SK-N-SH (cell line): ENCODE measurements at regions of chr7 and their contacts with region 1.

Region 1: DNA sequence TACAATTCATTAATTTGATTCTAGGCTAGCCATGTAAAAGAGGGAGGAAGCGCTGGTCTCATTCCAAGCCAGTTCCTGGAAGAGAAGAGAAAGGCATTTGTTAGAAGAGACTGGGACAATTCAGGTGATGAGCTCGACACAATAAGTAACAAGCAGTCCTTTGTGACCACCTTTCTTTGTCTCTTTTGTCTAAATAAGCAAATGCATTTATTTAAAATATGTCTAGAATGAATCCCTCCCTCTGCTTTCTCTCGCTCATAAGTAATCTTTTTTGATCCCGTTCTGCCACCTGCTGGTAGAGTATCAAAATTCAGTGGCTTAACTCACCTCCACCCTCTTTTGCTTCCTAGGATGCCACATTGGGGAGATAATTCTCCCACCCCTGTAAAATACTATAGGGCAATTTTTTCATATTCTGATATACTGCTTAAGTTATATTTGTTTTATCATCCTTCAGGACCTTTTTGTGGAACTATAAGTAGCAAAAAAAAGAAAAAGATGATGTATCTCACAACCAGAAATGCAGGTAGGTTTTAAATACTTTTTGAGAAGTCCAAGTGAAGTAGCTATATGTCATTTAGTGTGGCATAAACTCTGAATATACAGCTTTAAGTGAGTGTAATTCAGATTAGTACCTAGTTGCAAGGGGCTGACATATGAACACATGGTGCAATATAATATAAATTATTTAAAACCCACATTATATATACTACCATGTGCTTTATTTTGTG is 91.5 kb downstream of the GSDME start:
- DNase-seq: peak; percentile 58
- H3K4me3 ChIP-seq: no peak overlapping the region
- H3K27ac ChIP-seq: no peak overlapping the region
- H3K4me1 ChIP-seq: peaks cover 5 to 6% of the 10 kb centered on the region in 2 experiments; a peak in 3 of 4 replicates
- H3K27me3 ChIP-seq: no peaks in the 10 kb centered on the region
- CTCF ChIP-seq: peak; percentile 97
- EP300 ChIP-seq: 0 out of 4 replicates have a peak, but pooled peaks of 1 of the 2 experiments have one; percentile 6
- RAD21 ChIP-seq: peak; percentile 88

Region 2: GRCh38 chr7:24411226-24411625 is 254.5 kb before region 1 on chr7:
- CTCF ChIA-PET with region 1: interaction called, 10 read pairs
- POLR2A ChIA-PET with region 1: no interaction called
- DNase-seq: no peak
- H3K4me3 ChIP-seq: no peak overlapping the region
- H3K27ac ChIP-seq: no peak overlapping the region
- H3K4me1 ChIP-seq: no peaks in the 10 kb centered on the region; a peak in 1 of 4 replicates
- H3K27me3 ChIP-seq: no peaks in the 10 kb centered on the region
- CTCF ChIP-seq: no peak
- EP300 ChIP-seq: no peak
- RAD21 ChIP-seq: no peak

Region 3: DNA sequence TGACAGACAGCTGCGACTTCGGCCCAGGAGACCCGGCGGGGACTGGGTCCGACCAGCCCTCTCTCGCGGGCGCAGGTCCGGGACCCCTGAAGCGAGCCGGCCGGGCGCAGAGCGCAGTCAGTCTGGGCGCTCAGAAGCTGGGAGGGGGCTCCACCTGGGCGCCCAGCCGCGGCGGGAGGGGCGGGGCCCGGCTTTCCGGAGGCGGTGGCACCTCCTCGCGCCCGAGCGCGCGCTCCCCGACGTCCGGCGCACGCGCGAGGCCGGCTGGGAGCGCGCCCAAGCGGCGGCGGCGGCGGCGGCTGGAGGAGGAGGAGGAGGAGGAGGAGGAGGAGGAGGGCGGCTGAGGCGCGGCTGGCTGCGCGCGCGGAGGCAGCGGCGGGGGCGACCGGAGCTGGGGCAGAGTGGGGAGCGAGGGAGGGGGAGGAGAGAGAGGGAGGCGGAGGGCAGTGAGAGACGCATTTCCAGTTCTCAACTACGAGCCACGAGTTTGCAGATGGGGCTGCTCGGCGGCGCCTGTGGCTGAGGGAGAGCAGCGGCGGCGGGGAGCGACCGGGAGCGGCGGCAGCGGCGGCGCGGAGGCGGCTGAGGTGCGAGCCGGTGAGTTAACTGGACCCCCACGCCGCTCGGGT is 92.6 kb before region 1 on chr7 and contains the start of gene PALS2:
- CTCF ChIA-PET with region 1: interaction called, 141 read pairs
- POLR2A ChIA-PET with region 1: no interaction called
- DNase-seq: peak; percentile 95
- H3K4me3 ChIP-seq: peak within 1 kb of the TSS; percentile 93 to 98
- H3K27ac ChIP-seq: peak within 1 kb of the TSS; percentile 20 to 61; a peak in 3 of 4 replicates
- H3K4me1 ChIP-seq: peaks cover 0 to 31% of the 10 kb centered on the region in 2 experiments; a peak in 2 of 4 replicates
- H3K27me3 ChIP-seq: peaks cover 12% of the 10 kb centered on the region; the same call in 1 of the 2 replicates
- CTCF ChIP-seq: no peak; the same call in 1 of the 2 replicates
- EP300 ChIP-seq: 0 out of 4 replicates have a peak, but pooled peaks of 1 of the 2 experiments have one; percentile 11
- RAD21 ChIP-seq: no peak
- polyA plus RNA-seq, gene PALS2: 6.1 and 6.9 TPM in 2 replicates

Region 4: DNA sequence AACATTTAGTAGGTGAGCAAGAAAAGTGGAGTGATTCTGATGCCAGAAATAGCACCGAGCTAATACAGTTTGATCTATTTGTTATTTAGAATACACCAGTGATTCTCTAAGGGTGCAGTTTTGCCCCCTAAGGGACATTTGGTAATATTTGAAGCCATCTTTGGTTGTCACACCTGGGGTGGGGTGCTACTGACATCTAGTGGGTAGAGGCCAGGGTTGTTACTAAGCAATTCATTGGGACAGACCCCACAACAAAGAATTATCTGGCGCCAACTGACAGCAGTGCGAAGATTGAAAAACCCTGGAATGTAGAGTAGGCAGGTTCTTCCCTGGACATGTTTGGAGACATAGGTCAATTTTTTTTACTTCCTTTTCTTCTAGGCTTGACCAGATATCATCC is 77.9 kb before region 1 on chr7:
- CTCF ChIA-PET with region 1: interaction called, 14 read pairs
- POLR2A ChIA-PET with region 1: no interaction called
- DNase-seq: no peak
- H3K4me3 ChIP-seq: no peak overlapping the region; a peak in 1 of 4 replicates
- H3K27ac ChIP-seq: no peak overlapping the region
- H3K4me1 ChIP-seq: no peaks in the 10 kb centered on the region
- H3K27me3 ChIP-seq: no peaks in the 10 kb centered on the region
- CTCF ChIP-seq: peak; percentile 55
- EP300 ChIP-seq: no peak
- RAD21 ChIP-seq: peak; percentile 66

Region 5: GRCh38 chr7:24653316-24654085 is 12.2 kb before region 1 on chr7:
- CTCF ChIA-PET with region 1: interaction called, 32 read pairs
- POLR2A ChIA-PET with region 1: no interaction called
- DNase-seq: no peak
- H3K4me3 ChIP-seq: no peak overlapping the region
- H3K27ac ChIP-seq: peak overlapping the region in 1 of 2 experiments; percentile 30; a peak in 1 of 4 replicates
- H3K4me1 ChIP-seq: peaks cover 0 to 2% of the 10 kb centered on the region in 2 experiments; a peak in 1 of 4 replicates
- H3K27me3 ChIP-seq: no peaks in the 10 kb centered on the region
- CTCF ChIP-seq: no peak
- EP300 ChIP-seq: no peak
- RAD21 ChIP-seq: no peak

Region 6: DNA sequence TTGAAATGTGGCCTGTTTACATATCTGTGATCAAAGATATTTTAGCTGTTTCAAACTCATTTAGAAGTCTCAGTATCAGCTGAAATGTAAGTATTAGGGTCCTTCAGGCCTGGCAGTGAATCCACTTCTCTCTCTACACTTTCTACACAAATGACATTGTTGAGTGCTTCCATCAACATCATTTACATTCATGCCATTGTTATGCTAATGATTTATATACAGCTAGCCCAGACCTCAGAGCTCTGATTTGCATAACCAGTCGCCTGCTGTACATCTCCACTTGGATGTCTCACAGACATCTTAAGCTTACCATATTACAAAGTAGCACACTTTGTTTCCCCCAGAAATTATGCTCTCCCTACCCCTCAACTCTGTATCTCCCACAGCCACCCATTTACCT is 20.0 kb after region 1 on chr7:
- CTCF ChIA-PET with region 1: interaction called, 28 read pairs
- POLR2A ChIA-PET with region 1: no interaction called
- DNase-seq: no peak
- H3K4me3 ChIP-seq: no peak overlapping the region
- H3K27ac ChIP-seq: no peak overlapping the region
- H3K4me1 ChIP-seq: no peaks in the 10 kb centered on the region; a peak in 2 of 4 replicates
- H3K27me3 ChIP-seq: no peaks in the 10 kb centered on the region
- CTCF ChIP-seq: no peak
- EP300 ChIP-seq: no peak
- RAD21 ChIP-seq: no peak